Activated T-helper 2 cell treated with anti-CD3 and anti-CD28 coated beads, Interferon-gamma antibody, Interleukin-2, Interleukin-4, amounts not matched to agents 10 μg/mL and 5 μg/mL and 100 μg/mL, durations not matched to agents 14 hours and 24 hours and 36 hours (primary cell): ENCODE measurements at regions of chr10 and their contacts with region 1.

Region 1: GRCh38 chr10:21533467-21534279 is at the start of gene MLLT10:
- DNase-seq: peak; percentile 88
- H3K4me3 Mint-ChIP-seq: peak within 1 kb of the TSS; percentile 85
- H3K27ac Mint-ChIP-seq: peak within 1 kb of the TSS; percentile 89
- H3K4me1 Mint-ChIP-seq: peaks cover 19% of the 10 kb centered on the region
- H3K27me3 Mint-ChIP-seq: peaks cover 20% of the 10 kb centered on the region
- total RNA-seq, gene MLLT10: 45.4 and 47.4 TPM in 2 replicates

Region 2: GRCh38 chr10:21336476-21337170 is 197.1 kb before region 1 on chr10:
- intact Hi-C with region 1: no loop called
- DNase-seq: no peak
- H3K4me3 Mint-ChIP-seq: no peak overlapping the region
- H3K27ac Mint-ChIP-seq: no peak overlapping the region
- H3K4me1 Mint-ChIP-seq: no peaks in the 10 kb centered on the region
- H3K27me3 Mint-ChIP-seq: no peaks in the 10 kb centered on the region

Region 3: DNA sequence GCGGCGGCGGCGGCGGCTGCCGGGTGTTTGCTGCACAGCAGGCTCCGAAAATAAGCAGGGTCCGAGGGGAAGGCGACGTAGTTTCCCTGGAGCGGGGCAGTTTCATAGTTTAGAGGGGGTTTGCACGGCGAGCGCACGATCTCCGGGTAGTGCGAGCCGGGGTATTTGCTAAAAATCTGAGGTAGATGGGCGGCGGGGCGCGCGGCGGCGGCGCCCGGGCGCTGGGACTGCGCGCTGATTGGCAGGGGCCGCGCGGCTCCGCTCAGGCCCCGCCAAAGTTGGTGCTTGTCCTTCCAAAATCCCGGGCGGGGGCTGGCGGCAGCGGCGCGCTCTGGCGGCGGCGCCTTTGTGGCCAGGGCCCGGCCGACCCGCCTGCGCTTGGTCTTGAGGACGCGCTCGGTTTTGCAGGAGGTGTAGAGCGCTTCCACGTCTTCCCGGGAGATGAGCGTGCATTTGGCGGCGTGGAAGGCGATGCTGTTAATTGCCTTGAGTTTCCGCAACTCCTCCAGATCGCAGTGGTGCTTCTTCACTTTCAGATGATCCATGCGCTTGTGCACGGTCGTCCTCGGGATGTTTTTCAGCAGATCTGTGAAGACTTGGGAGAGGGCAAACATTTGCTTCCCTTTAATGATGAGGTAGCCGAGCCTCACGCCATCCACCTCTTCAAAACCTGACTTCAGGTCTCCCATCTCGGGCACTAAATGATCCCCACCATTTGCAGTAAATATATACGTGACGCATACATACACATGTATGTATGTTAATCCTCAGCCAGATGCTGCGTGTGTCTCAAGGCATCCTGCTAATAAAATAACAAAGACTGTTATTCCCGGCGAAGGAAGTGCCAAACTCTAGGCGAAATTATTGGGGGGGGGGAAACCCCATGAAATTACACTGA is 16.3 kb before region 1 on chr10:
- intact Hi-C with region 1: loop called (anchors 2 kb)
- DNase-seq: no peak
- H3K4me3 Mint-ChIP-seq: peak overlapping the region; percentile 65
- H3K27ac Mint-ChIP-seq: no peak overlapping the region
- H3K4me1 Mint-ChIP-seq: peaks cover 39% of the 10 kb centered on the region
- H3K27me3 Mint-ChIP-seq: peaks cover 64% of the 10 kb centered on the region

Region 4: GRCh38 chr10:21547246-21547645 is 13.6 kb after region 1 on chr10:
- intact Hi-C with region 1: no loop called
- DNase-seq: no peak
- H3K4me3 Mint-ChIP-seq: no peak overlapping the region
- H3K27ac Mint-ChIP-seq: no peak overlapping the region
- H3K4me1 Mint-ChIP-seq: peaks cover 4% of the 10 kb centered on the region
- H3K27me3 Mint-ChIP-seq: no peaks in the 10 kb centered on the region

Region 5: GRCh38 chr10:21584834-21585530 is 51.3 kb after region 1 on chr10:
- intact Hi-C with region 1: loop called (anchors 5 kb)
- DNase-seq: no peak
- H3K4me3 Mint-ChIP-seq: no peak overlapping the region
- H3K27ac Mint-ChIP-seq: peak overlapping the region; percentile 64
- H3K4me1 Mint-ChIP-seq: peaks cover 44% of the 10 kb centered on the region
- H3K27me3 Mint-ChIP-seq: no peaks in the 10 kb centered on the region

Region 6: DNA sequence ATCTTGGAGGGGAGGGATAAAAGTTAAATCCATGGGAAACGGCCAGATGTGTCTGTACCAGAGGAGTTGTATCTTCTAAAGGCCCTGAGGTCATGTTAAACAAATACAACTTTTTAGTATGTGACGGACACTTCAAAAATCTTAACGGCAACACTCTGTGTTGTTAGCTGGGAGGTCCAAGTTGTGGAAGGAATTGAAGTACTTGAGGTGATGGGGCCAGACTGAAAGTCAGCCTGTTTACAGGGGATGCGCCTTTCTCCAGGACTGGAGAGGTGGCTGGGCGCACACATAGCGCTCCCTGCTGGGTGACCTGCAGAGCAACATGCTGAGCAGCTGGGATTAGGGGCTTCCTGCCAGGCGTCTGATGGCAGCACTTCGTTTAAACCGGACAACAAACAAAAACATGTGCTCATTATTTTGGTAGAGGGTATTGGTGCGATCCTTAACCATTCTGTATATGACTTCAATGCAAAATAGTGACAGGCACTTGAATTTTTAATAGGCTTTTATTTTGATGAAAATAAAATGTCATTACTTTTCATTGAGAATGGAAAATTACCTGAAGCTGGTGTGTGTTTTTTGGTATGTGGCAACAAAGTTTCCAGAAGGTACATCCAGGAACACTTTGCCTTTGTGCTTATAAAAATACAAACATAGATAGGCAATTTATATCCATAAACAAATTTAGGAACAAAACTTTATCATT is 198.5 kb after region 1 on chr10:
- intact Hi-C with region 1: loop called (anchors 5 kb)
- DNase-seq: peak; percentile 34
- H3K4me3 Mint-ChIP-seq: no peak overlapping the region
- H3K27ac Mint-ChIP-seq: no peak overlapping the region
- H3K4me1 Mint-ChIP-seq: peaks cover 23% of the 10 kb centered on the region
- H3K27me3 Mint-ChIP-seq: no peaks in the 10 kb centered on the region

Region 7: DNA sequence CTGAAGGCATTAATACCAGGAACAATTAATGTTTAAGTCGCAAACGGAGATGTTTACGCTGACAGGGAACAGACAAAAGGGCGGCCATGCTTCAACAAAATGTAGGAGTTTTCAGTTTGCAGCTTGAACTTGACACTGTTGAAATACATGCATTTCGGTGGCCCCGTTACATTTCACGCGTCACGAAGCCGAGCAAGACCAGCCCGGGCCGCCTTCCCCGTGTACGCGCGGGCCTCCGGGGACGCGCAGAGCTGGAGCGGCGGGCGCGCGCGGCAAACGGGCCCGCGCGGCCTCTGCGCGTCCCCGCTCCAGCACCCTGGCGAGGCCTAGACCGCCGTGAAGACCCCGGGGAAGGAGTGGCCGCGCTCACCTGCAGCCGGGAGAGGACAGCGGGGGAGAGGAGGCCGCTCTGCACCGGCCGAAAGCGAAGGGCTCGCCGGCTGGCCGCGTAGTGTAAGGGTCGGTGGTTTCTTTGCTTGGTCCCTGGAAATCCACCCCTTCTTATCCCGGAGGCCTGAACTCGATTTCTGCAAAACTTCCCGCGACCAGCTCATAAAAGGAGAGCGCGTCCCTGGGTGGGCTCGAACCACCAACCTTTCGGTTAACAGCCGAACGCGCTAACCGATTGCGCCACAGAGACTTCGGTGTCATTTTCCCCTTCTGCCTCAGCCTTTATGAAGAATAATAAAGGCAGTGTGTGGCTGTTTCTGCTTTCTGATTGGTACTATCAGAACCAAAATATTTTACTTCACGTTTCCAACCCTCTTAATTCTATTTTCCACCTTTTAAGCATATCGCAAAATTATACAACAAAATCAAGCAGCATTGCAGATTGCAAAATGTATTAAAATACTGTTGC is 695.5 kb after region 1 on chr10:
- intact Hi-C with region 1: loop called (anchors 5 kb)
- DNase-seq: peak; percentile 82
- H3K4me3 Mint-ChIP-seq: peak overlapping the region; percentile 88
- H3K27ac Mint-ChIP-seq: peak overlapping the region; percentile 82
- H3K4me1 Mint-ChIP-seq: peaks cover 18% of the 10 kb centered on the region
- H3K27me3 Mint-ChIP-seq: peaks cover 8% of the 10 kb centered on the region

Region 8: GRCh38 chr10:22316285-22317120 is 782.8 kb after region 1 on chr10 and contains the start of gene COMMD3:
- intact Hi-C with region 1: loop called (anchors 5 kb)
- DNase-seq: peak; percentile 79
- H3K4me3 Mint-ChIP-seq: peak within 1 kb of the TSS; percentile 88
- H3K27ac Mint-ChIP-seq: peak within 1 kb of the TSS; percentile 88
- H3K4me1 Mint-ChIP-seq: peaks cover 40% of the 10 kb centered on the region
- H3K27me3 Mint-ChIP-seq: peaks cover 1% of the 10 kb centered on the region
- total RNA-seq, gene COMMD3: 92.1 and 105 TPM in 2 replicates